BJ (cell line): ENCODE measurements at regions of chr4 and their contacts with region 1.

Region 1: GRCh38 chr4:39658756-39659155 is 20.1 kb upstream of the SMIM14 start:
- DNase-seq: no peak
- H3K4me3 ChIP-seq: no peak overlapping the region
- H3K27me3 ChIP-seq: no peaks in the 10 kb centered on the region
- CTCF ChIP-seq: peak; percentile 38

Region 2: GRCh38 chr4:39062094-39062769 is 596.5 kb before region 1 on chr4 and contains the start of gene KLHL5:
- CTCF ChIA-PET with region 1: no interaction called
- POLR2A ChIA-PET with region 1: no interaction called
- DNase-seq: no peak
- H3K4me3 ChIP-seq: no peak within 1 kb of the TSS
- H3K27me3 ChIP-seq: no peaks in the 10 kb centered on the region
- CTCF ChIP-seq: no peak
- polyA plus RNA-seq, gene KLHL5: 77.4 and 108 TPM in 2 replicates

Region 3: GRCh38 chr4:39469429-39470077 is 189.2 kb before region 1 on chr4:
- CTCF ChIA-PET with region 1: interaction called, 32 read pairs
- POLR2A ChIA-PET with region 1: no interaction called
- DNase-seq: peak; percentile 57
- H3K4me3 ChIP-seq: no peak overlapping the region
- H3K27me3 ChIP-seq: no peaks in the 10 kb centered on the region
- CTCF ChIP-seq: peak; percentile 84

Region 4: DNA sequence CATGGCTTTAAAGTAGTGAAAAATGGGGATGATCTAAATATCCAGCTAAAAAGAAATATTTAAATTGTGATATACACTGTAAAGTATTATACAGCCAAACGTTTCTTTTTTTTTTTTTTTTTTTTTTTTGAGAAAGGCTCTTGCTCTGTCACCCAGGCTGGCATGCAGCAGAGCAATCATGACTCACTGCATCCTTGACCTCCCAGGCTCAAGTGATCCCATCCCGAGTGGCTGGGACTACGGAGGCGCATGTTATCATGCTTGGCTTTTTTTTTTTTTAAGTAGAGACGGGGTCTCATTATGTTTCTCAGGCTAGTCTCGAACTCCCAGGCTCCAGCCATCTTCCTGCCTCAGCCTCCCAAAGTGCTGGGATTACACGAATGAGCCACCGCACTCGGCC is 37.2 kb before region 1 on chr4:
- CTCF ChIA-PET with region 1: no interaction called
- POLR2A ChIA-PET with region 1: no interaction called
- DNase-seq: no peak
- H3K4me3 ChIP-seq: no peak overlapping the region
- H3K27me3 ChIP-seq: no peaks in the 10 kb centered on the region
- CTCF ChIP-seq: no peak

Region 5: GRCh38 chr4:39638354-39639240 is 20.2 kb before region 1 on chr4 and contains the start of gene SMIM14:
- CTCF ChIA-PET with region 1: interaction called, 12 read pairs
- POLR2A ChIA-PET with region 1: no interaction called
- DNase-seq: peak; percentile 90
- H3K4me3 ChIP-seq: peak within 1 kb of the TSS; percentile 94
- H3K27me3 ChIP-seq: no peaks in the 10 kb centered on the region
- CTCF ChIP-seq: no peak
- polyA plus RNA-seq, gene SMIM14: 25.4 and 41.9 TPM in 2 replicates

Region 6: DNA sequence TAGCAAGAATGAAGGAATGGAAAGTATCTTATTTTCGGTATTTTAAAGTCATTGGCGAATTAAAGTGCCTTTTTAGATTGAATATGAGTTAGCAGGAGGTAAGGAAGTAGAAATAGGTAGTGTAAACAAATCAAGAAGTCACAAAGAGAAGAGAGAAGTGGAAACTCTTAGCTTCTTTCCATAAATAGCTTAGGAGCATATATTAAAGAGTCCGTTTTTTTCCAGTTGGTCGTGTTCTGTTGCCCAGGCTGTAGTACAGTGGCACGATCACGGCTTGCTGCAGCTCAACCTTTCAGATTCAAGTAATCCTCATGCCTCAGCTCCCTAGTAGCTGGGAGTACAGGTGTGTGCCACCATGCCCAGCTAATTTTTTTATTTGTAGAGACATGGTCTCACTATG is 95.6 kb after region 1 on chr4:
- CTCF ChIA-PET with region 1: no interaction called
- POLR2A ChIA-PET with region 1: no interaction called
- DNase-seq: no peak
- H3K4me3 ChIP-seq: no peak overlapping the region
- H3K27me3 ChIP-seq: no peaks in the 10 kb centered on the region
- CTCF ChIP-seq: no peak